AG04450 (cell line): ENCODE measurements at regions of chr3 and their contacts with region 1.

Region 1: GRCh38 chr3:99645277-99646106 is 7.1 kb downstream of the COL8A1 start:
- DNase-seq: no peak
- H3K4me3 ChIP-seq: no peak overlapping the region
- H3K27ac ChIP-seq: peak overlapping the region; percentile 77
- H3K27me3 ChIP-seq: no peaks in the 10 kb centered on the region
- CTCF ChIP-seq: peak; percentile 74; the same call in 1 of the 2 replicates

Region 2: GRCh38 chr3:99656624-99657023 is 11.1 kb after region 1 on chr3:
- CTCF ChIA-PET with region 1: interaction called, 18 read pairs
- POLR2A ChIA-PET with region 1: interaction called, 6 read pairs
- DNase-seq: no peak
- H3K4me3 ChIP-seq: no peak overlapping the region
- H3K27ac ChIP-seq: no peak overlapping the region
- H3K27me3 ChIP-seq: no peaks in the 10 kb centered on the region
- CTCF ChIP-seq: no peak

Region 3: GRCh38 chr3:99668044-99668443 is 22.6 kb after region 1 on chr3:
- CTCF ChIA-PET with region 1: interaction called, 12 read pairs
- POLR2A ChIA-PET with region 1: no interaction called
- DNase-seq: no peak
- H3K4me3 ChIP-seq: no peak overlapping the region
- H3K27ac ChIP-seq: no peak overlapping the region
- H3K27me3 ChIP-seq: no peaks in the 10 kb centered on the region
- CTCF ChIP-seq: no peak

Region 4: GRCh38 chr3:99747915-99748314 is 102.4 kb after region 1 on chr3:
- CTCF ChIA-PET with region 1: interaction called, 19 read pairs
- POLR2A ChIA-PET with region 1: no interaction called
- DNase-seq: no peak
- H3K4me3 ChIP-seq: no peak overlapping the region
- H3K27ac ChIP-seq: no peak overlapping the region
- H3K27me3 ChIP-seq: no peaks in the 10 kb centered on the region
- CTCF ChIP-seq: peak; percentile 29

Region 5: DNA sequence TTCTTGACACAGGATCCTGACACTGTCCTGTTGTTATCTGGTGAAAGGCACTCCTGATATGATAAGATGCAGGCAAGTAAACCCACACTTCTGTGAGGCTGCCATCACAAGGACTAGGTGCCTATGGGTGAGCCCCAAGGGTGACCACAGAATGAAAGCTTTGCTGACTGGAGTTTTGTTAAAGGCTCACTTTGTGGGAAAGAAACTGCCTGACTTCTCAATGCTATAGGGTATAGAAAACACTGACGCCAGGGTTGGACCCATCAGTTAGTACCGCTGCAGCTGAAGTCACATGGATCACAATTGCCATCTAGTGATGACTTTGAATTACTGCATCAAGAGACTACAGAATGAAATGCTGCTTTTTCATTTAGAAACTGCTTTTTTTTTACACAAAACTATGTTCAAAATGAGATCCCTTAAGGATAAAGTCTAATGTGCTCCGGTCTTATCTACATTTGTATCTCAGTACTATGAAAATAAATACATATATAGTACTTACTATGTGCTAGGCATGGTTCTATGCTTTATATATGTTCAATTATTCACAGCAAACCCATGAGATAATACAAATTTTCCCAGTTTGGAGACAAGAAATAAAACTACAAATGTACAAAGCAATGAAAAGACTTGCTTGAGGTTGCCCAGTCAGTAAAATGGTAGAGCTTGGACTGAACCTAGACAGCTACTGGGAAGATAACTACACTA is 107.9 kb after region 1 on chr3:
- CTCF ChIA-PET with region 1: interaction called, 19 read pairs
- POLR2A ChIA-PET with region 1: no interaction called
- DNase-seq: peak; percentile 63
- H3K4me3 ChIP-seq: no peak overlapping the region
- H3K27ac ChIP-seq: no peak overlapping the region
- H3K27me3 ChIP-seq: no peaks in the 10 kb centered on the region
- CTCF ChIP-seq: peak; percentile 84